ENCODE measurements at regions of chr4 and their contacts with region 1.

Region 1: DNA sequence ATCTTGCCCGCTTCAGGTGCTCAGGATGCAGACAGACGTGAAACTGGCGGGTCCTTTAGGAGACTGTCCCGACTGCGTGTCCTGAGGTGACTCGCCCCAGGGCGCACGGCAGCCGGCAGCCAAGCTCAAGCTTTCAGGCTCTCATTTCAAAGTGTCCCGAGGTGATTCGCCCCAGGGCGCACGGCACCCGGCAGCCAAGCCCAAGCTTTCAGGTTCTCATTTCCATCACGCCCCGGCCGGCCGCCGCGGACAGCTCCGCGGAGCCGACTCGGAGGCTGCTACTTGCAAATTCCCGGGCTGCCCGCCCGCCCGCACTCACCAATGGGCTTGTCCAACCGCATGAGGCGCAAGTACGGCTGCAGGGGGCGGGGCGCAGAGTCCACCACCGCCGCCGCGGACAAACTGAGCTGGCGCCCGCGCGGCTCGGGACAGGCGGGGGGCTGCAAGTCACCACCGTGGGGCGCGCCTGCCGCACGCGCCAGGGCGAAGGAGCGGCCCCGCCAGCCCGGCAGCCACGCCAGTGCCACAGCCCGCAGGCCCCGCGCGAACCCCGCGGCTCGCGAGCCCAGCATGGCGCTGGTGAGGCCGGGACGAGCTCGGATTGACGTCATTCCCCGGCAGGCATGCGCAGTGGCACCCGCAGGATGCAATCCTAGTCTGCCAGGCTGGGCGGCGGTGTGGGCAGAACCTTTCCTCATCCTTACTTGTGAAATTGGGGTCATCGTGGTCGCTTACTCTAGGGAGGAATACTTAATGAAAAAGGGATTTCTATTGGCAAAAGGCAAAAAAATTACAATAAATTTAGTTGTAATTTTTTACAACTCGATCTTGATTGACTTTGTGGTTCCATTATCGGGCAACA is at the start of gene COQ2:
- DNase-seq: no peak
- ATAC-seq: peak; percentile 80
- H3K4me3 ChIP-seq: peak within 1 kb of the TSS; percentile 69
- H3K27ac ChIP-seq: peak within 1 kb of the TSS; percentile 63
- H3K4me1 ChIP-seq: peaks cover 6% of the 10 kb centered on the region
- H3K27me3 ChIP-seq: no peaks in the 10 kb centered on the region
- CTCF ChIP-seq: peak in 2 of 3 experiments; percentile 10 to 16; a peak in 1 of 6 replicates
- EP300 ChIP-seq: no peak
- POLR2A ChIP-seq: peak; percentile 84
- RAD21 ChIP-seq: no peak
- polyA plus RNA-seq, gene COQ2: 5.0 to 11.2 TPM

Region 2: GRCh38 chr4:82462415-82462831 is 822.0 kb before region 1 on chr4:
- CTCF ChIA-PET with region 1: interaction called, 3 read pairs
- POLR2A ChIA-PET with region 1: no interaction called
- RAD21 ChIA-PET with region 1: no interaction called
- SMC1A ChIA-PET with region 1: no interaction called
- in situ Hi-C with region 1: no loop called
- intact Hi-C with region 1: loop called (anchors 10 kb)
- DNase-seq: peak; percentile 54
- ATAC-seq: peak; percentile 99
- H3K4me3 ChIP-seq: no peak overlapping the region
- H3K27ac ChIP-seq: no peak overlapping the region
- H3K4me1 ChIP-seq: no peaks in the 10 kb centered on the region
- H3K27me3 ChIP-seq: no peaks in the 10 kb centered on the region
- CTCF ChIP-seq: peak; percentile 59 to 83 (median 82)
- EP300 ChIP-seq: no peak
- POLR2A ChIP-seq: no peak
- RAD21 ChIP-seq: peak; percentile 71

Region 3: DNA sequence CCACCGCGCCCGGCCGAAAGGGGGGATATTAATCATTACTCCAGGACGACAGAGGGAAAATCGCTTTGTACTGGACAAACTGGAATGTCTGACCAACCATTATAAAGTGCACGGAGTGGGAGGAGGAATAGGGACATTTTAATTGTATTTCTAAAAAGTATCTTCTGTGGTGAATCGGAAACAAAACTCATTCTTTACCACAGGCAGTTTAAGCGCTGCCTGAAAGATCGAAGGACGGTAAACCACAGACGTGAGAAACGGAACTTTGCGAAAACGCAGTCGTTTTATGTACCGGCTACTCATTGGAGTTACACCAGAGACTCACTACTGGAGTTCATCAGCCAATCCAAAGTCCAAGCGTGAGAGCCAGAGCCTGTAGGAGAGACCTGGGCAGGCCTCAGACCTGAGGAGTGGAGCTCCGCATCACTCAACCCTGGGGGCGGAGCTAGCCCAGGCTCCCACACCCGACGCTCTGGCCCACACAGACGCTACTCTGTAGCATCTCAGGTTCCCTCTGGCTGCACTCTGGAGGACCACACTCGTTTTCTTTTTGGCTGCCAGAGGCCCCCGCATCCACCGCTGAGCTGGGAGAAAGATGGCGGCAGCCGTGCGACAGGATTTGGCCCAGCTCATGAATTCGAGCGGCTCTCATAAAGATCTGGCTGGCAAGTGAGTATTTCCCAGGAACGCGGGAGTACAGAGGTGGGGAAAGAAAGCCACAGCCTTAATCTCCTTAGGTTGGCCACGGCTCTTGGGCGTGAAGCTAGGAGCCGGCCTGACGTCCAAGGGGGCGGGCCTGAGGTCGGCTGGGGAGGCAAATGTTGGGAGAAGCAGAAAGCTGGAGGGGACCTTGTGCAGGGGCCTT is 249.6 kb before region 1 on chr4 and contains the start of gene COPS4:
- CTCF ChIA-PET with region 1: interaction called, 22 read pairs
- POLR2A ChIA-PET with region 1: interaction called, 3 read pairs
- RAD21 ChIA-PET with region 1: interaction called, 14 read pairs
- SMC1A ChIA-PET with region 1: interaction called, 18 read pairs
- in situ Hi-C with region 1: no loop called
- intact Hi-C with region 1: no loop called
- DNase-seq: peak; percentile 100
- ATAC-seq: peak; percentile 96
- H3K4me3 ChIP-seq: peak within 1 kb of the TSS; percentile 78
- H3K27ac ChIP-seq: peak within 1 kb of the TSS; percentile 77
- H3K4me1 ChIP-seq: peaks cover 6% of the 10 kb centered on the region
- H3K27me3 ChIP-seq: no peaks in the 10 kb centered on the region
- CTCF ChIP-seq: peak in 1 of 3 experiments; percentile 17; a peak in 1 of 6 replicates
- EP300 ChIP-seq: peak; percentile 42 to 66; a peak in 3 of 4 replicates
- POLR2A ChIP-seq: peak; percentile 74
- RAD21 ChIP-seq: 0 out of 2 replicates have a peak, but pooled peaks have one; percentile 15
- polyA plus RNA-seq, gene COPS4: 112 to 159 TPM

Region 4: DNA sequence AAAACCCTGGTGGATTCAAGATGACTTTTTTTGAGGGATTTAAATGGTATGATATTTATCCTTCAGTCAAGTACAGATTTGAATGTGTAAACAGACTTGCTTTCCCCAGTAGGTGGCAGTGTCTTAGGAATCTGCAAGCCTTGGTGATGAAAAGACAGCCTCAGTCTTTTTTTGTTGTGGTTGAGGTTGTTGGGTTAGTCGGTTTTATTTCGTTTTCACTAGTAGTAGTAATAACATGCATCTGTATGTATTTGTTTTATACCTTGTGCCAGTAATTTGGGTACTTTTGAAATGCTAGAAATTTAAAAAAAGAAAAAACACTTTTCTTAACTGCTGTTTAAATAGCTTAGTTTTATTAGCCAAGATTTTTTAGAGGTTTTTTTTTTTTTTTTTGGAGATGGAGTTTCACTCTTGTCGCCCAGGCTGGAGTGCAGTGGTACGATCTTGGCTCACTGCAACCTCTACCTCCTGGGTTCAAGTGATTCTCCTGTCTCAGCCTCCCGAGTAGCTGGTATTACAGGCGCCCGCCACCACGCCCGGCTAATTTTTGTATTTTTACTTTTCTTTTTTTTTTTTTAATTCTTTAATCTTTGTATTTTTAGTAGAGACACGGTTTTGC is 210.2 kb before region 1 on chr4:
- CTCF ChIA-PET with region 1: interaction called, 147 read pairs
- POLR2A ChIA-PET with region 1: interaction called, 9 read pairs
- RAD21 ChIA-PET with region 1: interaction called, 70 read pairs
- SMC1A ChIA-PET with region 1: interaction called, 46 read pairs
- in situ Hi-C with region 1: no loop called
- intact Hi-C with region 1: loop called (anchors 1 kb)
- DNase-seq: peak; percentile 79
- ATAC-seq: peak; percentile 95
- H3K4me3 ChIP-seq: no peak overlapping the region
- H3K27ac ChIP-seq: peak overlapping the region; percentile 7; the same call in 1 of the 2 replicates
- H3K4me1 ChIP-seq: peaks cover 8% of the 10 kb centered on the region
- H3K27me3 ChIP-seq: no peaks in the 10 kb centered on the region
- CTCF ChIP-seq: peak; percentile 74 to 78 (median 77)
- EP300 ChIP-seq: 0 out of 4 replicates have a peak, but pooled peaks of 1 of the 2 experiments have one; percentile 31
- POLR2A ChIP-seq: no peak
- RAD21 ChIP-seq: peak; percentile 92

Region 5: DNA sequence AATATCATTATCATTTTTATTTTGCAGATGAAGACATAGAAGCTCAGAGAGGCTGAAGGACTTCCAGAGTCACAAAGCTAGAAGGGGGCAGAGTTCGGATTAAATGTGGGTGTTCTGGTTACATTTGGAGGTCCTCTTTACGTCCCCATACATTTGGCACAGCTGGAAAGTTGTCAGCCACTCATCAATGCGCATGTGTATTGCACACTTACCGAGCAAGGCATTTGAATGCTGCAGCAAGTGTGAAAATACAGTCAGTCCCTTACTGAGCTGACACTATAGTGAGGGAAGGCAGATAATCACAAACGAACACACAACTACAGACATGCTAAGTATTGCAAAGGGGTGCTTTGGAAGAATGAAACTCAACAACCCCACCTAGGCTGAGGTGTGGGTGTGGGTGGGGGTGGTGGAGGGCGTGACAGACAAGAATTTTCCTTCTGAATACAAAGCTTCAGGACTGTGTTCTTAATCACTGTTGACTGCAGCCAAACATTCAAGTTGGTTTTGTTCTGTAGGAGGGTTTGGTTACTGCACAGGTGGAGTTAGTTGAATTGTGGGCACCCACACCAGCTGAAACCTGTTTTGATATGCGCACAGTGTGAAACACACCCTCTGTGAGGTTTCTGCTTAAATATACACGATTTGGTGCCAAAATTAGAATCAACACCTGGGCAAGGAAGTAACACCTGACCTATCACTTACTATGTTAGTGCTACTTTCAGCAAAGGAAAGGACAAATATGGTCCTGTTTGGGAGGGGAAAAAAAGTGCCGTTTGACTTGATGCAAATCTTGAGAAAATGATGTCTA is 72.2 kb before region 1 on chr4:
- CTCF ChIA-PET with region 1: interaction called, 25 read pairs
- POLR2A ChIA-PET with region 1: interaction called, 7 read pairs
- RAD21 ChIA-PET with region 1: interaction called, 24 read pairs
- SMC1A ChIA-PET with region 1: interaction called, 27 read pairs
- in situ Hi-C with region 1: no loop called
- intact Hi-C with region 1: no loop called
- DNase-seq: peak; percentile 90
- ATAC-seq: peak; percentile 87
- H3K4me3 ChIP-seq: no peak overlapping the region
- H3K27ac ChIP-seq: peak overlapping the region; percentile 60
- H3K4me1 ChIP-seq: peaks cover 29% of the 10 kb centered on the region
- H3K27me3 ChIP-seq: no peaks in the 10 kb centered on the region
- CTCF ChIP-seq: no peak
- EP300 ChIP-seq: peak; percentile 70 to 88; a peak in 3 of 4 replicates
- POLR2A ChIP-seq: no peak
- RAD21 ChIP-seq: no peak

Region 6: DNA sequence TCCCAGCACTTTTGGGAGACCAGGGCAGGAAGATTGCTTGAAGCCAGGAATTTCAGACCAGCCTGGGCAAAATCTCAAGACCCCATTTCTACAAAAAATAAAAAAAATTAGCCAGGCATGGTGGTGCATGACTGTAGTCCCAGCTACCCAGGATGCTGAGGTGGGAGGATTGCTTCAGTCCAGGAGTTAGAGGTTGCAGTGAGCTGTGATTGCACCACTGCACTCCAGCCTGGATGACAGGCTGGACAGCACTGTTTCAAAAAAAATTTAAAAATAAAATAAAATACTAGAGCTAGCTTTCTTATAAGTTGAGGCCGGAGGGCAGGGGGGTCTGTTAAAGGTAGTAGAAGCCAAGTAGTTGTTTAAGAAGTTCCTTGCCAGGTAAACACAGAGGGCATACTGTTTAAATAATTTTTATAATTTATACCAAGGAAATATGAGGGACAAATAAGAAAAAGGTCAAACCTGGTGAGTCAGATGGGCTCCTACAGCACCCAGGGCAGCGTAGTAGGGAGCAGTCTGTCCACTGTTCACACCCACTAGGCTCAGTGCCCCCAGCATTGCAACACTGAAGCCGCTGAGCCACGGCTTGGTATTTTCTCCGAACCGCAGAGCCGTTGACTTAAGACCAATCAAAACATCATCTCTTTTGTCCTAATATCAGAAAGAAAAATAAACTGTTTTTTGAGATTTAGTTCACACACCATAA is 17.1 kb before region 1 on chr4:
- CTCF ChIA-PET with region 1: interaction called, 80 read pairs
- POLR2A ChIA-PET with region 1: interaction called, 5 read pairs
- RAD21 ChIA-PET with region 1: interaction called, 54 read pairs
- SMC1A ChIA-PET with region 1: interaction called, 85 read pairs
- in situ Hi-C with region 1: no loop called
- intact Hi-C with region 1: no loop called
- DNase-seq: no peak
- ATAC-seq: no peak
- H3K4me3 ChIP-seq: no peak overlapping the region
- H3K27ac ChIP-seq: peak overlapping the region; percentile 40
- H3K4me1 ChIP-seq: peaks cover 22% of the 10 kb centered on the region
- H3K27me3 ChIP-seq: no peaks in the 10 kb centered on the region
- CTCF ChIP-seq: no peak
- EP300 ChIP-seq: no peak
- POLR2A ChIP-seq: no peak
- RAD21 ChIP-seq: no peak

Region 7: GRCh38 chr4:83316459-83317165 is 32.2 kb after region 1 on chr4:
- CTCF ChIA-PET with region 1: no interaction called
- POLR2A ChIA-PET with region 1: no interaction called
- RAD21 ChIA-PET with region 1: no interaction called
- SMC1A ChIA-PET with region 1: no interaction called
- in situ Hi-C with region 1: no loop called
- intact Hi-C with region 1: no loop called
- DNase-seq: no peak
- ATAC-seq: no peak
- H3K4me3 ChIP-seq: no peak overlapping the region
- H3K27ac ChIP-seq: no peak overlapping the region
- H3K4me1 ChIP-seq: no peaks in the 10 kb centered on the region
- H3K27me3 ChIP-seq: no peaks in the 10 kb centered on the region
- CTCF ChIP-seq: no peak
- EP300 ChIP-seq: no peak
- POLR2A ChIP-seq: no peak
- RAD21 ChIP-seq: no peak

Region 8: GRCh38 chr4:83387753-83388676 is 103.6 kb after region 1 on chr4:
- CTCF ChIA-PET with region 1: no interaction called
- POLR2A ChIA-PET with region 1: no interaction called
- RAD21 ChIA-PET with region 1: no interaction called
- SMC1A ChIA-PET with region 1: no interaction called
- in situ Hi-C with region 1: no loop called
- intact Hi-C with region 1: no loop called
- DNase-seq: no peak
- ATAC-seq: 0 out of 3 replicates have a peak, but pooled peaks have one; percentile 22
- H3K4me3 ChIP-seq: no peak overlapping the region
- H3K27ac ChIP-seq: no peak overlapping the region
- H3K4me1 ChIP-seq: no peaks in the 10 kb centered on the region
- H3K27me3 ChIP-seq: no peaks in the 10 kb centered on the region
- CTCF ChIP-seq: no peak
- EP300 ChIP-seq: no peak
- POLR2A ChIP-seq: no peak
- RAD21 ChIP-seq: no peak

Region 9: GRCh38 chr4:83855044-83855443 is 570.6 kb after region 1 on chr4:
- CTCF ChIA-PET with region 1: no interaction called
- POLR2A ChIA-PET with region 1: no interaction called
- RAD21 ChIA-PET with region 1: no interaction called
- SMC1A ChIA-PET with region 1: no interaction called
- in situ Hi-C with region 1: no loop called
- intact Hi-C with region 1: no loop called
- DNase-seq: no peak
- ATAC-seq: no peak
- H3K4me3 ChIP-seq: no peak overlapping the region
- H3K27ac ChIP-seq: no peak overlapping the region
- H3K4me1 ChIP-seq: no peaks in the 10 kb centered on the region
- H3K27me3 ChIP-seq: no peaks in the 10 kb centered on the region
- CTCF ChIP-seq: no peak
- EP300 ChIP-seq: no peak
- POLR2A ChIP-seq: no peak
- RAD21 ChIP-seq: no peak